AG04449 (cell line): ENCODE measurements at regions of chr17 and their contacts with region 1.

Region 1: DNA sequence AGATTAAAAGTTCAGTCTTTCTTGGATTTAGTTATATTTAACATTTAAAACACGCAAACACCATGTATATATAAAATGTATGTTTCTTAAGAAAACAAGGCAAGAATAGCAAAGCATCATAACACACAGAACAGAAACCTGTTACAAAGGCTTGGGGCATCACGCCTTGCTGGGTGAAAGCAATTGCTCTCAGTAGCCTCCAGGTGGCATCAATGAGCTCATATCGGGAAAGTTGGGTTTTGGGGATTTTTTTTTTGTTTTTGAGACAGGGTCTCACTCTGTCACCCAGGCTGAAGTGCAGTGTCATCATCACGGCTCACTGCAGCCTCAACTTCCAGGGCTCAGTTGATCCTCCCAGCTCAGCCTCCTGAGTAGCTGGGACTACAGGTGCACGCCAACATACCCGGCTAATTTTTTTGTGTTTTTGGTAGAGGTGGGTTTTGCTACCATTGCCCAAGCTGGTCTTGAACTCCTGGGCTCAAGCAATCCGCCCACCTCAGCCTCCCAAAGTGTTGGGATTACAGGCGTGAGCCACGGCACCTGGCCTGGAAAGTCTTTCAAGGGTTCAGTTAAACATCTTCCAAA is 56.9 kb downstream of the CYB5D2 start:
- DNase-seq: no peak
- H3K4me3 ChIP-seq: no peak overlapping the region
- CTCF ChIP-seq: peak; percentile 74

Region 2: GRCh38 chr17:3582915-3583314 is 617.0 kb before region 1 on chr17:
- CTCF ChIA-PET with region 1: no interaction called
- POLR2A ChIA-PET with region 1: no interaction called
- DNase-seq: no peak
- H3K4me3 ChIP-seq: no peak overlapping the region
- CTCF ChIP-seq: no peak

Region 3: GRCh38 chr17:3788200-3788599 is 411.7 kb before region 1 on chr17:
- CTCF ChIA-PET with region 1: no interaction called
- POLR2A ChIA-PET with region 1: no interaction called
- DNase-seq: no peak
- H3K4me3 ChIP-seq: no peak overlapping the region
- CTCF ChIP-seq: no peak

Region 4: GRCh38 chr17:4004517-4005295 is 195.2 kb before region 1 on chr17:
- CTCF ChIA-PET with region 1: no interaction called
- POLR2A ChIA-PET with region 1: no interaction called
- DNase-seq: no peak
- H3K4me3 ChIP-seq: no peak overlapping the region
- CTCF ChIP-seq: peak; percentile 81

Region 5: DNA sequence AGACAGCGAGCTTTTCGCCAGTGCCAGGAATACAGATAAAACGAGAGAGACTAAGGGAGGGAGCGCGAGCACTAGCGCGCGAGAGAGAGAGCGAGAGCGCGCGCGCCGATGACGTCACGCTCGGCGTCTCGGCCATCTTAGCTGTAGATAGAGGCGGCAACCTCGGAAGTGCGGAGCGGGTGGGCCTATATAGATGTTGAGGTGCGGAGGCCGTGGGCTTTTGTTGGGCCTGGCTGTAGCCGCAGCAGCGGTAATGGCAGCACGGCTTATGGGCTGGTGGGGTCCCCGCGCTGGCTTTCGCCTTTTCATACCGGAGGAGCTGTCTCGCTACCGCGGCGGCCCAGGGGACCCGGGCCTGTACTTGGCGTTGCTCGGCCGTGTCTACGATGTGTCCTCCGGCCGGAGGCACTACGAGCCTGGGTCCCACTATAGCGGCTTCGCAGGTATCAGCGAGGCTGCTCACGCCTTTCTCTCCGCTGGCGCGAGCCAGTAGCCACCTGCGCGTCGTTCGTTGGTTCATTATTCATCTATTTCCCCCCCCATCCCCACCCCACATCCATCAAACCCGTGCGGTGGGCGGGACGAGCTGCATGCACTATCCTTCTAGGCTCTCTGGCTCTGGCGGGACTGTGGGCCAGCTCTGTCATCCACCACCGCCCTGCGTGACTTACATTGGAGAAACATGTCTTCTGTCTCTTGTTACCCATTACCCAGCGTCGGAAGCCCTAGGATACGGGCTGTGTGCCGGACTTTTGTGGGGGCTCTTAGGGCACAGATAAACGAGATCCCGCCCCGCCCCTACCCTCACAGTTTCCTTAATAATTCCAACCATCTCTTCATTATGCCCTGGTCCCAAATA is 56.1 kb before region 1 on chr17:
- CTCF ChIA-PET with region 1: no interaction called
- POLR2A ChIA-PET with region 1: no interaction called
- DNase-seq: peak; percentile 65
- H3K4me3 ChIP-seq: peak overlapping the region; percentile 88
- CTCF ChIP-seq: no peak

Region 6: GRCh38 chr17:4161560-4162221 is 38.2 kb before region 1 on chr17:
- CTCF ChIA-PET with region 1: interaction called, 12 read pairs
- POLR2A ChIA-PET with region 1: no interaction called
- DNase-seq: no peak
- H3K4me3 ChIP-seq: no peak overlapping the region
- CTCF ChIP-seq: no peak

Region 7: GRCh38 chr17:4186357-4186881 is 13.5 kb before region 1 on chr17:
- CTCF ChIA-PET with region 1: interaction called, 12 read pairs
- POLR2A ChIA-PET with region 1: no interaction called
- DNase-seq: no peak
- H3K4me3 ChIP-seq: no peak overlapping the region
- CTCF ChIP-seq: no peak

Region 8: GRCh38 chr17:4249452-4250029 is 49.6 kb after region 1 on chr17:
- CTCF ChIA-PET with region 1: interaction called, 14 read pairs
- POLR2A ChIA-PET with region 1: interaction called, 3 read pairs
- DNase-seq: no peak
- H3K4me3 ChIP-seq: no peak overlapping the region
- CTCF ChIP-seq: peak; percentile 41

Region 9: GRCh38 chr17:4412933-4413831 is 213.3 kb after region 1 on chr17:
- CTCF ChIA-PET with region 1: interaction called, 105 read pairs
- POLR2A ChIA-PET with region 1: no interaction called
- DNase-seq: peak; percentile 40
- H3K4me3 ChIP-seq: no peak overlapping the region; the same call in 1 of the 2 replicates
- CTCF ChIP-seq: peak; percentile 95